CD14-positive monocyte (primary cell): ENCODE measurements at regions of chr19 and their contacts with region 1.

Region 1: GRCh38 chr19:42386974-42387707 is 3.0 kb downstream of the CNFN start:
- DNase-seq: peak; percentile 64 to 69 (median 65)
- H3K4me3 ChIP-seq: peak overlapping the region; percentile 4 to 76 (median 21)
- H3K4me3 Mint-ChIP-seq: peak overlapping the region; percentile 65 to 84
- H3K27ac ChIP-seq: no peak overlapping the region
- H3K27ac Mint-ChIP-seq: peak overlapping the region in 2 of 7 donors; percentile 19 to 61
- H3K4me1 ChIP-seq: peaks cover 9 to 12% of the 10 kb centered on the region in 2 donors
- H3K4me1 Mint-ChIP-seq: peaks cover 6% of the 10 kb centered on the region
- H3K27me3 ChIP-seq: peaks cover 0 to 39% of the 10 kb centered on the region in 2 donors
- H3K27me3 Mint-ChIP-seq: peaks cover 26 to 53% (median 40%) of the 10 kb centered on the region in 3 donors
- CTCF ChIP-seq: peak; percentile 71

Region 2: GRCh38 chr19:42345191-42345812 is 41.8 kb before region 1 on chr19:
- intact Hi-C with region 1: loop called in 1 of 2 experiments (anchors 5 kb)
- DNase-seq: no peak
- H3K4me3 ChIP-seq: no peak overlapping the region
- H3K4me3 Mint-ChIP-seq: no peak overlapping the region
- H3K27ac ChIP-seq: no peak overlapping the region
- H3K27ac Mint-ChIP-seq: peak overlapping the region in 1 of 7 donors; percentile 28
- H3K4me1 ChIP-seq: peaks cover 15 to 18% of the 10 kb centered on the region in 2 donors
- H3K4me1 Mint-ChIP-seq: peaks cover 19% of the 10 kb centered on the region
- H3K27me3 ChIP-seq: no peaks in the 10 kb centered on the region
- H3K27me3 Mint-ChIP-seq: peaks cover 0 to 3% (median 0%) of the 10 kb centered on the region in 3 donors
- CTCF ChIP-seq: no peak

Region 3: DNA sequence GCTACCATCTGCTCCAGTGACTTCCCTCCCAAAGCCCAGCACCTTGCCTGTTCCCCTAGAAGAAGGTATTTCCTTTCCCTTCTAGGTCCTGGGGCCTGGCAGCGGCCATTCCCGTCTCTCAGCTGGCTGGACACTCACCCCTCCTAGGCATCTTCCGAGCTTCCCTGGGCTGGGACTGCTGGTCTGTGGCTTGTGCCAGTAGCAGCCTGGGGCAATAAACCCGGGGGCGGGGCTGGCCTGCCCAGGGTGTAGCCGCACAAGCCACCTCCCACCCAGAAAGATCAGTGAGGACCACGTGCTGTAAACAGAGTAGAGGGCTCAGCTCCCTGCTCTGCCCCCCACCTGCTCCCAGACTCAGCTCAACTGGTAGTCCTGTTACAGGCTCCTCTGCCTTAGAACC is 25.1 kb after region 1 on chr19:
- intact Hi-C with region 1: no loop called
- DNase-seq: no peak
- H3K4me3 ChIP-seq: no peak overlapping the region
- H3K4me3 Mint-ChIP-seq: no peak overlapping the region
- H3K27ac ChIP-seq: no peak overlapping the region
- H3K27ac Mint-ChIP-seq: no peak overlapping the region
- H3K4me1 ChIP-seq: no peaks in the 10 kb centered on the region
- H3K4me1 Mint-ChIP-seq: no peaks in the 10 kb centered on the region
- H3K27me3 ChIP-seq: no peaks in the 10 kb centered on the region
- H3K27me3 Mint-ChIP-seq: peaks cover 0 to 9% (median 2%) of the 10 kb centered on the region in 3 donors
- CTCF ChIP-seq: no peak